ENCODE measurements at regions of chr11 and their contacts with region 1.

Region 1: GRCh38 chr11:12043959-12044819 is 35.8 kb upstream of the DKK3 start:
- DNase-seq: no peak
- H3K4me3 ChIP-seq: peak overlapping the region in 1 of 8 donors; percentile 1
- H3K27ac ChIP-seq: no peak overlapping the region
- H3K4me1 ChIP-seq: peaks cover 0 to 32% (median 17%) of the 10 kb centered on the region in 6 donors
- H3K27me3 ChIP-seq: no peaks in the 10 kb centered on the region
- CTCF ChIP-seq: peak; percentile 76 to 93 (median 86)
- POLR2A ChIP-seq: no peak

Region 2: DNA sequence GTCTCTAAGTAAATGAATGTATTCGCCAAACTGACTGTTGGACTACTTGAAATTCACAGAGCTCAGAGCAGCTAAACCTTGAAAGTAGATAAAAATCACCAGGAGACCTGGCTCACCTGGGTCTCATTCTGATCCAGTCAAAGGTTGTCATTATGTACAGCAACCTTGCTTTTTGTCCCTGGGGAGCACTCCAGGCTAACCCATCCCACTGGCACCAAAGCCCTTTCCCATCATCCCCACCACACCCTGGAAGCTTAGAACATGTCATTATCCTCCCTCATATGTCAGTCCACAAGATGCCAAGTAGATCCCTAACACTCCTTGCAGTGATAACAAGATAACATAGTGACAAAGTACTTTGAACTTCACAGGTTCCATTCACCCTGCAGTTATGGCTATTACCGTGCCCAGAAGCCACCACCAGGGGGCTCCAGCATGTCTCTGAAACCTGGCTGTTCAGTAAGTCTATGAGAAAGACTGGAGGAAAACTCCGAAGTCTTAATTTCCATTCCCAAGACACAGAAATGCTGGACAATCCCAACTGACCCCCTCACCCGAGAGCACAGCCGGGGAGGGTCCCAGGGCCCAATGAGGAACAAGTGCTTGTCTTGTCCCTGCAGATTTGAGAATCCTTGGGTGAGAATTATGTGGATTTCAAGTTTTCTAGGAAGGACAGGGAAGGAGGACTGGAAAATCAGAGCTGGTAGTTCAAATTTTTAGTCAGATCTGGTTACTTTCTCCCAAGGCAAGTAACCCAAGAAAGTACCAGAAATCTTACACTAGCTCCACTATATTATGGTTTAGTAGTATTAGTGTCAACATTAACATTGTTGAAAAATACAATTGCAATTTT is 245.4 kb before region 1 on chr11:
- intact Hi-C with region 1: loop called (anchors 2 kb)
- DNase-seq: peak; percentile 92
- H3K4me3 ChIP-seq: no peak overlapping the region
- H3K27ac ChIP-seq: no peak overlapping the region
- H3K4me1 ChIP-seq: peaks cover 0 to 2% (median 0%) of the 10 kb centered on the region in 6 donors
- H3K27me3 ChIP-seq: peaks cover 0 to 32% (median 3%) of the 10 kb centered on the region in 7 donors
- CTCF ChIP-seq: peak; percentile 33 to 92 (median 77)
- POLR2A ChIP-seq: no peak

Region 3: DNA sequence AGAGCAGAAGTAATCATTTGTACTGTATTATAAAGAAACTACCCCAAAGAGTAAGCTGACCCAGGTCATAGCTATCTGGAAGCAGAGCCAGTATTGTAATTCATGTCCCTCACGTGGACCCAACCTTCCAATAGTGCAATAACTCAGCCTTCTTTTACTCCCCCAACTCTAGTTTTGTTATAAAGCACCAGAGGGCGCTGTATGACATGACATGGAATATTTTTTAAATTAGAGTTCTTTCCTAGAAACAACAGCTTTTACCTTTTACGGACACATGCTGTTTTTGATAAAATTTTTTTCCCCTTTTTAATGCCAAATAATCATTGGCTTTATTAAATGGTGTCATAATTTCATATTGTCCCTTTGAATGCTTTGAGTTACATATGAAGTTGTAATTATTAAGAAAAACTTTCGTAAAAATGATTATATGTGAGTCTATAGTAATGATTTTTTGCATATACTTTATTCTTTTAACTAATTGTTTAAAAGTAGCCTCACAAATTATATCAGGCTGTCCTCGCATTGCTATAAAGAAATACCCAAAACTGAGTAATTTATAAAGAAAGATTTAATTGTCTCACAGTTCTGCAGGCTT is 112.6 kb before region 1 on chr11:
- intact Hi-C with region 1: loop called (anchors 10 kb)
- DNase-seq: no peak
- H3K4me3 ChIP-seq: no peak overlapping the region
- H3K27ac ChIP-seq: no peak overlapping the region
- H3K4me1 ChIP-seq: no peaks in the 10 kb centered on the region
- H3K27me3 ChIP-seq: no peaks in the 10 kb centered on the region
- CTCF ChIP-seq: peak in 9 of 11 experiments; percentile 10 to 68 (median 49)
- POLR2A ChIP-seq: no peak

Region 4: DNA sequence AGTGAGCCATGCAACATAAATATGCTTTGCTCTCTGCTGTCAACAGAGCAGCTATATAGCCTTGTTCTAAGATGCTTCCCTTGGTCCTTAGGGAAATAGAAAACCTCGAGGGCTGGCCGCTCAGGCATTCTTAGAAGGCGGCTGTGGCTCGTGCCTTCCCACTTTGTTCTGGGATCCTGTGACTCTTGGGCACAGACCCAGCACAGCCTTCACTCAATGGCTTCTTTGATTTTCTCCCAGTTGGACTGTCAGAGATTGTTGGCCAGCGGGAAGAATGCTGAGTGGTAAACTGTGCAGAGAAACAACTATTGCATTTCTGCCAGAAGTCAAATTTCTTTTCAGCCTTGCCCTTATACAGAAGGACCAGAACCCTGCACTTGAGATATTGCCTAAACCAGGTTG is 56.7 kb after region 1 on chr11:
- intact Hi-C with region 1: no loop called
- DNase-seq: no peak
- H3K4me3 ChIP-seq: no peak overlapping the region
- H3K27ac ChIP-seq: no peak overlapping the region
- H3K4me1 ChIP-seq: peaks cover 0 to 20% (median 5%) of the 10 kb centered on the region in 6 donors
- H3K27me3 ChIP-seq: peaks cover 0 to 4% (median 0%) of the 10 kb centered on the region in 7 donors
- CTCF ChIP-seq: no peak
- POLR2A ChIP-seq: no peak

Region 5: GRCh38 chr11:12235947-12236743 is 192.0 kb after region 1 on chr11:
- intact Hi-C with region 1: loop called (anchors 2 kb)
- DNase-seq: no peak
- H3K4me3 ChIP-seq: peak overlapping the region in 1 of 8 donors; percentile 15
- H3K27ac ChIP-seq: peak overlapping the region in 5 of 8 donors; percentile 32 to 76 (median 60)
- H3K4me1 ChIP-seq: peaks cover 0 to 25% (median 16%) of the 10 kb centered on the region in 6 donors
- H3K27me3 ChIP-seq: no peaks in the 10 kb centered on the region
- CTCF ChIP-seq: peak; percentile 45 to 83 (median 75)
- POLR2A ChIP-seq: no peak

Region 6: GRCh38 chr11:12281571-12282478 is 237.6 kb after region 1 on chr11:
- intact Hi-C with region 1: loop called (anchors 2 kb)
- DNase-seq: peak; percentile 89
- H3K4me3 ChIP-seq: no peak overlapping the region
- H3K27ac ChIP-seq: no peak overlapping the region
- H3K4me1 ChIP-seq: peaks cover 0 to 21% (median 8%) of the 10 kb centered on the region in 6 donors
- H3K27me3 ChIP-seq: peaks cover 0 to 10% (median 0%) of the 10 kb centered on the region in 7 donors
- CTCF ChIP-seq: peak; percentile 87 to 97 (median 92)
- POLR2A ChIP-seq: no peak

Measured in spleen (tissue), 13 donors.